ENCODE measurements at regions of chr5 and their contacts with region 1.

Region 1: DNA sequence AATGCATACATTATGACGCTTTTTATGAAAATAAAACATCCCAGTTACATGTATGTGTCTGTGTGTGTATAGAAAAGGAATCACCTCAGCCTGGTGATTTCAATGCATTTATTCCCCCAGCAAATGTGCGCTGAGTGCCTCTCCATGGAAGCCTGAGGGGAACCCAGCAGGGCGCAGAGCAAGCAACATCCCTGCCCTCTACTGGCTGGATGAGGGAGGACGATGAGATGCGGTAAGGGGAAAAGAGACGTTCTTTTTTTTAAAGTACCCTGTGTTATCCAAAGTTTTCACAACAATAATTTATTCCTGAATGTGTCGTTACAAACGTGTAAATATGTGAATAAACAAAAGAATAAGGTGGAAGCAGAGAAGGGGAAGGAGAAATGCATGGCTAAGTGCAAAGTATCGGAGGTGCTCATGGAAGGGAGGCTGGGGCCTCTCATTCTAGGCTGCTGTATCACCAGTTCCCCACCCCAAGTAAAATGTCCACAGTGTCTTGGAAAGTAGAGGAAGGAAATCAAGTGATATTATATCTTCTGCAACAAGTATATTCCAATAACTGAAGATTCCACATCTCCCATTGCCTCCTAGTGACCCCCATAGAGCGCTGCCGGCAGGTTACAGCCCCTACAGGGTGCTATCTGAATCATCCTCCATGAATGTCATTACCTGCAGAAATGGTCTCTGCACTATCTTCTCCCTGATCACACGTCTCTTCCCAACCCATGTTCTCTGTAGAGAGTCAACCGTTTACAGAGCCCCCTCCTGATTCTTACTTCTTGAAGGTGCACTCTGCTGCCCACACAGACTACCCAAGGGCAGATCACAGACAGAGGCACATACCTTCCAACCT is 13.0 kb upstream of the ABLIM3 start:
- DNase-seq: peak in 1 of 2 experiments; percentile 64
- H3K4me3 ChIP-seq: peak overlapping the region; percentile 32; the same call in 1 of the 2 replicates
- H3K27ac ChIP-seq: peak overlapping the region; percentile 94
- H3K4me1 ChIP-seq: peaks cover 86% of the 10 kb centered on the region
- H3K27me3 ChIP-seq: no peaks in the 10 kb centered on the region
- CTCF ChIP-seq: peak; percentile 83

Region 2: DNA sequence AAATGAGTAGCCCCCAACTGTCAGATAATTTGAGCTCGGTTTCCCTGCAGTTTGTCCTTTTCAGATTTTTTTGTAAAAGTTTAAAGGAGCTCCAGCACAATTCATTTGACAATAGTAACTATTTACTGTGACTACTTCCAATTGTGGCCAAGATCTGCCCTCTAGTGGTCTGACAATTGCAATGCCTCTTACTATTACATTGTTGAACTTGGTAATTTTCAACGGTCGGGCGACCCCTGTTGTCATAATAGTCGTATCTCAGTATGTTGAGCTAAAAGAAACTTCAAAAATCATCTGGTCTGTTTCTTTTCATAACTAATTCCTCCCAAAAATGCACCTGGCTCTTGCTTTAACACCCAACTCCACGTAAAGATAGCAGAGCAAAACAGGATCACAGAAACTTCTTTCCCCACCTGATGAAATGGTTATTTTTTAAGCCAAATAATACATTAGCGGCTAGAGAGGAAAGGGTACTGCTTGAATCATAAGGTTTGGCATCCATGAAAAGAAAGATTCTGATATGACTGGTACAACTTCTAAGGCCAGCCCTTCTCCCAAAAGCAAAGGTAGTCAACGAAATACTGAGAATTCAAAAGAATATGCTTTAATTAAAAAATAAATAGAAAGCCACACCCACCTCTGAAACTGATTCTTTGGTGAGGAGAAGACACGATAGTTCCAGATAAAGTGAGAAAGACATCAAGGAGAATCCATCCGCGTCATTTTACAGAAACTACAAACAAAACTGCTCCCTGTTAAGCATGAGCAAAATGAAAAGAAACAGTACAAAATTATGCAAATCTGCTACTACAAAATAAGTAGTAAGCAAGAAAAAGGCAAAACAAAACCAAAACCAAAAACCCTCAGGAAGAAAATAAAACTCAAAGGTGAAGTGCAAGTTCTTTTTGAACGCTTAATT is 397.0 kb before region 1 on chr5:
- CTCF ChIA-PET with region 1: interaction called, 4 read pairs
- POLR2A ChIA-PET with region 1: no interaction called
- intact Hi-C with region 1: loop called (anchors 1 kb)
- DNase-seq: peak; percentile 65 to 69
- H3K4me3 ChIP-seq: no peak overlapping the region
- H3K27ac ChIP-seq: no peak overlapping the region
- H3K4me1 ChIP-seq: peaks cover 27% of the 10 kb centered on the region
- H3K27me3 ChIP-seq: no peaks in the 10 kb centered on the region
- CTCF ChIP-seq: peak; percentile 95

Region 3: DNA sequence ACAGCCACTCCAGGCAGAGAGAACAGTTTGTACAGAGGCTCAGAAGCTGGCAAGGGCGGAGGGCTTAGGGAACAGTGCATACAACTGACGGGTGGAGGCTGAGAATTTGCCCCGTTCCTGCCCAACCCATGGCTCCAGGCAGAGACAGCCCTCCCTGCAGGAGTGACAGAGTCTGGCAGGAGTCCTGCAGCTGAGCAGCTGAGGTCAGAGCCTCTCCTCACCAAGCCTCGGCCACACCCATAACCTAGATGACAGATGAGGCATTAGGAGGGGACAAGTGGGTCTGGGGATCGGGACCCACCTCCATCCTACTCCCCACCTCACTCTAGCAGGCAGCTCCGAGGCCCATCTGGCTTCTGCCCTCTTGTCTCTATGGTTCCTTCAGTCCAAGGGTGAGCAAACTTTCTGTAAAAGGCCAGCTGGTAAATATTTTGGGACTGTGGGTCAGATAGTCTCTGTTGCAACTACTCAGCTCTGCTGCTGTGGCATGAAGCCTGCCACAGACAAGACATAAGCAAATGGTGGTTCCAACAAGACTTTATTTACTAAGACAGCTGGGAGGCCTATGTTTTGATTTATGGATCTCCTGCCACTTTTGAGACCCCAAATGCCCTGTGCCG is 149.0 kb before region 1 on chr5:
- CTCF ChIA-PET with region 1: no interaction called
- POLR2A ChIA-PET with region 1: interaction called, 32 read pairs
- intact Hi-C with region 1: no loop called
- DNase-seq: peak; percentile 84 to 85
- H3K4me3 ChIP-seq: peak overlapping the region; percentile 32; the same call in 1 of the 2 replicates
- H3K27ac ChIP-seq: peak overlapping the region; percentile 99
- H3K4me1 ChIP-seq: peaks cover 79% of the 10 kb centered on the region
- H3K27me3 ChIP-seq: no peaks in the 10 kb centered on the region
- CTCF ChIP-seq: no peak

Region 4: DNA sequence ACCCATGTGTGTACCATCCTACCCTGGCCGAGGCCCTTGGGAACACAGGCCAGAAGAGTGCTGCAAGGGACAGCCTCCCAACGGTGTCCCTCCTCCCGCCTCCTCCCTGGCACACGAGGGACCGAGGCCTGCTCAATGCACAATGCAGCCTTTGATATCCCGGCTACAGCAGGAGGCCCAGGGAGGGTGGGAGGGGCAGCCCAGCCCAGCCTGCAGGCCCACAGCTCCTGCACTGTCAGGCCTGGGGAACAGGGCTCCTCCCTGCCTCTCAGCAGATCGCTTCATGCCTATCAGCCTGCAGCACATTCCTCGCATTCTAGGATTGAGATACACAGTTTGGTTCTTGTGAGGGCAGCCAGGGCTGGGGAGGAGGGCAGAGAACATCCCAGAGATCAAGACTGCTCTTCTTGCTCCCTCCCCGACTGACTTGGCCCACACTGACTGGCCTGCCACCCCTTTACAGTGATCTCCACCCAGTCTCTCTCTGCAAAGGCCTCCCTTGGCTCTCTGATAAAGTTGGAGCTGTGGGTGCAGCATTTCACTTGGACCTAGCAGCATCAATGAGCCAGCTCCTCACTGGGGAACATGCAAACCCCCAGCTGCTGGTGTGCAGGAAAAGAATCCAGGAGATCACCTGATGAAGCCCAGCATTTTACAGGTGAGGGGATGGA is 65.1 kb before region 1 on chr5 and contains the start of gene SH3TC2:
- CTCF ChIA-PET with region 1: no interaction called
- POLR2A ChIA-PET with region 1: no interaction called
- intact Hi-C with region 1: loop called (anchors 5 kb)
- DNase-seq: peak; percentile 81 to 90
- H3K4me3 ChIP-seq: peak within 1 kb of the TSS; percentile 46; the same call in 1 of the 2 replicates
- H3K27ac ChIP-seq: peak within 1 kb of the TSS; percentile 99
- H3K4me1 ChIP-seq: peaks cover 68% of the 10 kb centered on the region
- H3K27me3 ChIP-seq: no peaks in the 10 kb centered on the region
- CTCF ChIP-seq: no peak
- total RNA-seq, gene SH3TC2: 32.1 and 38.8 TPM in 2 replicates

Region 5: GRCh38 chr5:149079883-149080282 is 48.4 kb before region 1 on chr5:
- CTCF ChIA-PET with region 1: no interaction called
- POLR2A ChIA-PET with region 1: no interaction called
- intact Hi-C with region 1: no loop called
- DNase-seq: no peak
- H3K4me3 ChIP-seq: no peak overlapping the region
- H3K27ac ChIP-seq: no peak overlapping the region
- H3K4me1 ChIP-seq: peaks cover 6% of the 10 kb centered on the region
- H3K27me3 ChIP-seq: no peaks in the 10 kb centered on the region
- CTCF ChIP-seq: no peak

Region 6: DNA sequence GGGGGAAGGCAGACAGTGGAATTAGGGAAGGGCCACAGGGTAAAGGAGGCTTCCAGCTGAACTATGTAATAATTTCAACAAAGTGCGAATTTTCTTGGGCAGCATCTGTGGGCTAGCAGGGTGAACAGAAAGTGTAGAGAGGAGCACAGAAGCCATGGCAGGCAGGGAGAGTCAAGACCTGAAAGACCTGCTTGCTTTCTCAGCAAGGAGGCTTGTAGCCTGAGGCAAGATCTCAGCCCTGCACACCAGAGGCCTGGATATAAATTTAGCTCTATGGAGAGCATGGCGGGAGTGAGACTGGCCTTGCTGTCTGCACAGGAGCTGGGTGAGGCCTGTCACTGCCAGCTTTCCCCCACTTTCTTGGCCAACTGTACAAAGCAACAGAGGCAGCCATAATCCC is 33.3 kb before region 1 on chr5:
- CTCF ChIA-PET with region 1: no interaction called
- POLR2A ChIA-PET with region 1: no interaction called
- intact Hi-C with region 1: no loop called
- DNase-seq: peak; percentile 57 to 72
- H3K4me3 ChIP-seq: no peak overlapping the region
- H3K27ac ChIP-seq: peak overlapping the region; percentile 15; the same call in 1 of the 2 replicates
- H3K4me1 ChIP-seq: peaks cover 15% of the 10 kb centered on the region; the same call in 1 of the 2 replicates
- H3K27me3 ChIP-seq: no peaks in the 10 kb centered on the region
- CTCF ChIP-seq: no peak

Region 7: GRCh38 chr5:149141224-149141956 is 13.1 kb after region 1 on chr5 and contains the start of gene ABLIM3:
- CTCF ChIA-PET with region 1: interaction called, 8 read pairs
- POLR2A ChIA-PET with region 1: interaction called, 38 read pairs
- intact Hi-C with region 1: loop called (anchors 1 kb)
- DNase-seq: peak; percentile 54 to 91
- H3K4me3 ChIP-seq: peak within 1 kb of the TSS; percentile 97
- H3K27ac ChIP-seq: peak within 1 kb of the TSS; percentile 91
- H3K4me1 ChIP-seq: peaks cover 61% of the 10 kb centered on the region
- H3K27me3 ChIP-seq: no peaks in the 10 kb centered on the region
- CTCF ChIP-seq: peak; percentile 90
- total RNA-seq, gene ABLIM3: 101 and 111 TPM in 2 replicates

Region 8: GRCh38 chr5:149205625-149206523 is 77.6 kb after region 1 on chr5:
- CTCF ChIA-PET with region 1: interaction called, 4 read pairs
- POLR2A ChIA-PET with region 1: no interaction called
- intact Hi-C with region 1: loop called (anchors 5 kb)
- DNase-seq: peak; percentile 49 to 78
- H3K4me3 ChIP-seq: no peak overlapping the region
- H3K27ac ChIP-seq: peak overlapping the region; percentile 14; the same call in 1 of the 2 replicates
- H3K4me1 ChIP-seq: peaks cover 9% of the 10 kb centered on the region; the same call in 1 of the 2 replicates
- H3K27me3 ChIP-seq: no peaks in the 10 kb centered on the region
- CTCF ChIP-seq: no peak

Region 9: DNA sequence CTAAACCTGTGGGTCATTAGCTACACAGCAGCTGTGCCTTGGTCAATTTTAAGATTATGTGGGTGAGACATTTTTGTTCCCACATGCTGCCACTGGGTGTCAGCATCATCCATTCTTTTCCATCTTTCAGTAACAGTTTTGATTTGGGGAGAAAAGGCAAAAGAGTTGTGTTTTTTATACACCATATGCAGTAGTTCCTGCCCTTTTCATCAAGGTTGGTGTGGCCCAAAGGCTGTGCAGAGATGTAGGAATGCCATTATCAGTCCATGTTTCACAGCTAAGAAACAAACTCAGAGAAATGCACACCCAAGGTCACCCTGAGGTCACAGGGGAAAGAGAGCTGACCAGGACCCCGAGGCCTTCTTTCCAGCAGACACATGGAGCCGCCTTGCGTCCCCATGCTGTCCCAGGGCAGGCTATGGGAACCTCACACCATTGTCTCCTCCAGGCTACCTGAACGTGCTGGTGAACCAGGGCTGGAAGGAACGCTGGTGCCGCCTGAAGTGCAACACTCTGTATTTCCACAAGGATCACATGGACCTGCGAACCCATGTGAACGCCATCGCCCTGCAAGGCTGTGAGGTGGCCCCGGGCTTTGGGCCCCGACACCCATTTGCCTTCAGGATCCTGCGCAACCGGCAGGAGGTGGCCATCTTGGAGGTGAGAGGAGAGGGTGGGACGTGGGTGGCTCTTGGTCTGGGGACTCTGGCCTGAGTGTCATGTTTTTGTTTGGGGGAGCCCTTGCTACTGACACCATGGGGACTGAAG is 189.2 kb after region 1 on chr5:
- CTCF ChIA-PET with region 1: no interaction called
- POLR2A ChIA-PET with region 1: no interaction called
- intact Hi-C with region 1: no loop called
- DNase-seq: peak in 1 of 2 experiments; percentile 34
- H3K4me3 ChIP-seq: no peak overlapping the region
- H3K27ac ChIP-seq: no peak overlapping the region
- H3K4me1 ChIP-seq: peaks cover 3% of the 10 kb centered on the region; the same call in 1 of the 2 replicates
- H3K27me3 ChIP-seq: no peaks in the 10 kb centered on the region
- CTCF ChIP-seq: peak; percentile 79

Region 10: DNA sequence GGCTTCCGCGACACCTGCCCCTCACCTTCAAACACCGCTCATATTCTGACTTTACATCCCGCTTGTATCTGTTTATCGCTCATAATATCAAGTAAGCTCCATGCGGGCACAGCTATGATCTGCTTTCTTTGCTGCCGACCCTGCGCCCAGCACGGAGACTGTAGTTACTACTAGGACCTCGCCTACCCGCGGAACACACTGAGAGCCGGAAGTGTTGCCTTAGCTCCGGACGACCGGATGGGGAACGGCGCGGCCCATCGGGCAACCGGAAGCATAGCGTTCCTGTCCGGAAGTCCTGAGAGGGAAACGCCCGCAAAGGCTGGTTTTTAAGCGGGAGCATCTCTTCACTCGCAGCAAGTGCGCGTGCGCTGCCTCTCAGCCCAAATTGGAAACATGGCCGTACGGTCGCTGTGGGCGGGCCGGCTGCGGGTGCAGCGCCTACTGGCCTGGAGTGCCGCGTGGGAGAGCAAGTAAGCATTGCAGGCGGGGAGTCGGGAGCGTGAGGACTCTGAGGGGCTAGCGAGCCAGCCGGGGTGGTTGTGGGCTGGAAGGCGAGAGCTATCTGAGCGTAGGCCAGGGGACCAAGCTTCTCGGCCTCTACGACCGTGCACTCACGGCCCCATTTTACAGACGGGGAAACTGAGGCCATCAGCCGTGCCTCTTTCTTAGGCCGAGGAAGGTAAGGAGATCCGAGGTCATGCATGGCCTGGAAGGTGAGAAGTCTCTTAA is 217.1 kb after region 1 on chr5 and contains the start of gene GRPEL2:
- CTCF ChIA-PET with region 1: interaction called, 3 read pairs
- POLR2A ChIA-PET with region 1: no interaction called
- intact Hi-C with region 1: loop called (anchors 5 kb)
- DNase-seq: peak; percentile 92 to 95
- H3K4me3 ChIP-seq: peak within 1 kb of the TSS; percentile 95
- H3K27ac ChIP-seq: peak within 1 kb of the TSS; percentile 80
- H3K4me1 ChIP-seq: peaks cover 16% of the 10 kb centered on the region
- H3K27me3 ChIP-seq: no peaks in the 10 kb centered on the region
- CTCF ChIP-seq: no peak
- total RNA-seq, gene GRPEL2: 32.4 and 36.9 TPM in 2 replicates

Region 11: DNA sequence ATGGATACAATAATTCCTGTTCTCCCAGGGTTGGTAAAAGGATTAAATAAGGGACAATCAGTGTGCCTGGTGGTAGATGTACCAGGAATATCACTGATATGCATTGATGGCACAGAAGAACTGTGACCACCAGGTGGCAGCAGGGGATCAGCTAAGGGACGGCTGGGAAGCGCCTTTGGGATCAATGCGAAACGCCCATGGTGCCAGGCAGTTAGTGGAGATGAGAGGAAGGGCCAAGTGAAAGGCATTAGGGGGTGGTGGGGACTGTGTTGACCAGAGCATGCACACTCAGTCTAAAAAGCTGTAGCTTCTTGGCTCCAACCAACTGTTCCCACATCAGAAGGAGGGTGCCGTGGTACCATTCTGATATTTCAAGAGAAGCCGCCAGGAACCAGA is 508.6 kb after region 1 on chr5:
- CTCF ChIA-PET with region 1: no interaction called
- POLR2A ChIA-PET with region 1: no interaction called
- intact Hi-C with region 1: no loop called
- DNase-seq: peak in 1 of 2 experiments; percentile 35
- H3K4me3 ChIP-seq: no peak overlapping the region
- H3K27ac ChIP-seq: no peak overlapping the region
- H3K4me1 ChIP-seq: peaks cover 21% of the 10 kb centered on the region
- H3K27me3 ChIP-seq: no peaks in the 10 kb centered on the region
- CTCF ChIP-seq: peak; percentile 88